Mammary epithelial cell (primary cell): ENCODE measurements at regions of chr12 and their contacts with region 1.

Region 1: DNA sequence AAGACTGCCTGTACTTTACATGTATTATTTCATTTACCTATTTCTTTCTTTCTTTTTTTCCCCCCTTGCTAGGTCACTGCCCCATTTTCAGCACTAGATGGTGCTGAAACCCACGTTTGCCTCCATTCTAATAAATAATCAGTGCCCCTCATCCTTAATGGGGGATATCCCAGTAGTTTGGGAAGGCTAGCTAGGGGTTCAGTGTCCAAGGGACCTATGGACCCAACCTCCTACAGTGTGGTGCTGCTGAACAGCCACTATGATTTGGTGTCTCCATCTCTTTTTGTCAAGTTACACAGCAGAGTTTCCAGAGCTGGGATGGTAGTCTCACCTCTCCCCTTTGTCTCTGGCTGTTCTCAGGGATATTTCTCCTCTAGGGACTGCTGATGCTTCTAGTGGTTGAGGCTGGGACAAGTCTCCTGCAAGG is 6.5 kb upstream of the HCFC2 start:
- DNase-seq: no peak
- H3K4me3 ChIP-seq: no peak overlapping the region
- H3K27ac ChIP-seq: no peak overlapping the region
- H3K4me1 ChIP-seq: peaks cover 24% of the 10 kb centered on the region
- H3K27me3 ChIP-seq: no peaks in the 10 kb centered on the region
- CTCF ChIP-seq: peak; percentile 80 to 86

Region 2: DNA sequence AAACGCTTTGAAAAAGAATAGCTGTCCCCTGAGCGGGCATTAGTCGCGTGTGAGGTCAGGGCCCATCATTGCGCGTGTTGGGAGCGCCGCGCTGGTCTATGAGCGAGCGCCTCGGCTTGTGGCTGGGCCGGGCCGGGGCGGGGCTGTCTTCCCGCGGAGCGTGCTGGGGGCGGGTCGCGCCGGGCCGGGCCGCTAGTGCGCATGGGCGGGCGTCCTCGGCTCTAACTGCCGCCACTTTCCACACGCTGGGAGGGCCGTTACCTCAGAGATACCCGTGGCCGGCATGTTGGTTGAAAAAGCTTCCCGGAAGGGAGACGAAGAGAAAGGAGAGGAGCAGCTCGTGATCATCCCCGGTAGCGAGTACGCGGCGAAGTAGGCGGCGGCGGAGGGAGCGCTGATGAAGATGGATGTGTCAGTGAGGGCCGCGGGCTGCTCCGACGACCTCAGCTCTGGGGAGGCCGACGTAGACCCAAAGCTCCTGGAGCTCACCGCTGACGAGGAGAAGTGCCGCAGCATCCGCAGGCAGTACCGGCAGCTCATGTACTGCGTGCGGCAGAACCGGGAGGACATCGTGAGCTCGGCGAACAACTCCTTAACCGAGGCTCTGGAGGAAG is 245.9 kb after region 1 on chr12 and contains the start of gene EID3:
- CTCF ChIA-PET with region 1: no interaction called
- dilution Hi-C with region 1: no loop called
- in situ Hi-C with region 1: no loop called
- intact Hi-C with region 1: loop called (anchors 2 kb)
- DNase-seq: peak; percentile 71
- H3K4me3 ChIP-seq: peak within 1 kb of the TSS; percentile 32 to 55 (median 46)
- H3K27ac ChIP-seq: peak within 1 kb of the TSS; percentile 61
- H3K4me1 ChIP-seq: peaks cover 20% of the 10 kb centered on the region
- H3K27me3 ChIP-seq: no peaks in the 10 kb centered on the region
- CTCF ChIP-seq: no peak
- total RNA-seq, gene EID3: 5.3 to 6.3 TPM